ENCODE measurements at regions of chr12 and their contacts with region 1.

Region 1: GRCh38 chr12:106118-106591 is 39.6 kb downstream of the IQSEC3 start:
- DNase-seq: peak; percentile 94
- H3K4me3 ChIP-seq: peak overlapping the region; percentile 9
- H3K27ac ChIP-seq: peak overlapping the region; percentile 90
- H3K4me1 ChIP-seq: peaks cover 75% of the 10 kb centered on the region
- CTCF ChIP-seq: peak; percentile 67

Region 2: DNA sequence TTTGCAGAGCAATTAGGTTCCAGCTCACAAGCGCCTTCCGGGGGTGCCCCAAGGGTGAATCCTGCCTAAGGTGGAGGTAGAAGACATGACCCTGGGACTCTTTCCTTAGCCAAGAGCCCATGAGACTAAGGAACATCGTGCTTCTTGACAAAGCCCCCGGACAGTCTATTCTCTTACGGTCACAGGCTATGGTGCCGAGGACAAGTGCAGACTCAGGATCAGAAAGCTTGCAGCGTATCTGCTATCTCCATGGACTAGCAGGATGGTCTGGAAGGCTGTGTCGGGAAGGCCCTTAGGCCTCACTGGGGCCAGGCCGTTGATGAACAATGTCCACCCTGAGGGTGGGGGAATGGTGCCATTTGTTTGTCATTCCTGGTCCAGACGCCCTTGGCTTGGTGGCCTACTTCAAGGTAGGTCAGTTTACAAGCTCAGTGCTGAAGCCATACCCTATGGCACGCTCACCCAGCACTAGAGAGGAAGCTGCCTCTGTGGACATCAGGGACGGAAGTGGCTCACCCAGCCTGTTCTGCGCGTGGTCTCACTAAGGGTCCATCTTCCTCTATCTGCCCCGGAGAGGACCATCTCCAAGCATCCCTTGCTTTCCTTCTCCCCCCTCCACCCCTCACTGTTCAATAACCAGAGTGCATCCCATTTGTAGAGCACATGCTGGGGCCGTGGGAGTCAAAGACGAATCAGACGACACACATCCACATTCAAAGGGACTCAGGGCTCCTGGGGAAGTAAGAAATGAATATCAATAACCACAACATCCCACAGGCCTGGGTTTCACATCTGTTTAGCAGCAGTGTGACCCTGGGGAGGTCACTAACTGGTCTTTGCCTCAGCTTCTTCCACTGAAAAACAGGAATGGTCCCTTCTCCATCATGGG is 84.6 kb before region 1 on chr12:
- CTCF ChIA-PET with region 1: no interaction called
- POLR2A ChIA-PET with region 1: no interaction called
- intact Hi-C with region 1: no loop called
- DNase-seq: no peak
- H3K4me3 ChIP-seq: no peak overlapping the region
- H3K27ac ChIP-seq: no peak overlapping the region
- H3K4me1 ChIP-seq: no peaks in the 10 kb centered on the region
- CTCF ChIP-seq: no peak

Region 3: GRCh38 chr12:128079-128478 is 21.9 kb after region 1 on chr12:
- CTCF ChIA-PET with region 1: no interaction called
- POLR2A ChIA-PET with region 1: no interaction called
- intact Hi-C with region 1: loop called (anchors 1 kb)
- DNase-seq: peak; percentile 77
- H3K4me3 ChIP-seq: no peak overlapping the region
- H3K27ac ChIP-seq: peak overlapping the region; percentile 31
- H3K4me1 ChIP-seq: peaks cover 16% of the 10 kb centered on the region
- CTCF ChIP-seq: no peak

Region 4: GRCh38 chr12:153080-153746 is 47.1 kb after region 1 on chr12:
- CTCF ChIA-PET with region 1: interaction called, 3 read pairs
- POLR2A ChIA-PET with region 1: interaction called, 4 read pairs
- intact Hi-C with region 1: loop called (anchors 1 kb)
- DNase-seq: peak; percentile 87
- H3K4me3 ChIP-seq: no peak overlapping the region
- H3K27ac ChIP-seq: no peak overlapping the region
- H3K4me1 ChIP-seq: peaks cover 8% of the 10 kb centered on the region
- CTCF ChIP-seq: peak; percentile 97

Measured in OCI-LY7 (cell line).